ENCODE measurements at regions of chr6 and their contacts with region 1.

Region 1: GRCh38 chr6:35569011-35569461 is 56.3 kb upstream of the TULP1 start:
- DNase-seq: peak in 24 of 35 experiments; percentile 5 to 46 (median 18)
- ATAC-seq: peak; percentile 55 to 72 (median 68)
- H3K4me3 ChIP-seq: no peak overlapping the region
- H3K4me3 Mint-ChIP-seq: no peak overlapping the region
- H3K27ac ChIP-seq: no peak overlapping the region
- H3K27ac Mint-ChIP-seq: peak overlapping the region; percentile 23 to 77
- H3K4me1 ChIP-seq: no peaks in the 10 kb centered on the region
- H3K4me1 Mint-ChIP-seq: peaks cover 6 to 7% (median 6%) of the 10 kb centered on the region in 3 donors
- H3K27me3 ChIP-seq: peaks cover 0 to 2% of the 10 kb centered on the region in 2 experiments
- H3K27me3 Mint-ChIP-seq: peaks cover 5 to 7% of the 10 kb centered on the region in 2 donors

Region 2: GRCh38 chr6:35611240-35611639 is 42.2 kb after region 1 on chr6:
- CTCF ChIA-PET with region 1: no interaction called
- POLR2A ChIA-PET with region 1: interaction called in 1 of 2 experiments, 12 read pairs
- DNase-seq: peak in 21 of 35 experiments; percentile 6 to 62 (median 38)
- ATAC-seq: peak; percentile 68 to 88 (median 80)
- H3K4me3 ChIP-seq: no peak overlapping the region
- H3K4me3 Mint-ChIP-seq: peak overlapping the region in 2 of 3 donors; percentile 44 to 47
- H3K27ac ChIP-seq: peak overlapping the region; percentile 59
- H3K27ac Mint-ChIP-seq: peak overlapping the region; percentile 98
- H3K4me1 ChIP-seq: peaks cover 14 to 36% of the 10 kb centered on the region in 2 experiments
- H3K4me1 Mint-ChIP-seq: peaks cover 74 to 79% (median 74%) of the 10 kb centered on the region in 3 donors
- H3K27me3 ChIP-seq: no peaks in the 10 kb centered on the region
- H3K27me3 Mint-ChIP-seq: no peaks in the 10 kb centered on the region

Region 3: DNA sequence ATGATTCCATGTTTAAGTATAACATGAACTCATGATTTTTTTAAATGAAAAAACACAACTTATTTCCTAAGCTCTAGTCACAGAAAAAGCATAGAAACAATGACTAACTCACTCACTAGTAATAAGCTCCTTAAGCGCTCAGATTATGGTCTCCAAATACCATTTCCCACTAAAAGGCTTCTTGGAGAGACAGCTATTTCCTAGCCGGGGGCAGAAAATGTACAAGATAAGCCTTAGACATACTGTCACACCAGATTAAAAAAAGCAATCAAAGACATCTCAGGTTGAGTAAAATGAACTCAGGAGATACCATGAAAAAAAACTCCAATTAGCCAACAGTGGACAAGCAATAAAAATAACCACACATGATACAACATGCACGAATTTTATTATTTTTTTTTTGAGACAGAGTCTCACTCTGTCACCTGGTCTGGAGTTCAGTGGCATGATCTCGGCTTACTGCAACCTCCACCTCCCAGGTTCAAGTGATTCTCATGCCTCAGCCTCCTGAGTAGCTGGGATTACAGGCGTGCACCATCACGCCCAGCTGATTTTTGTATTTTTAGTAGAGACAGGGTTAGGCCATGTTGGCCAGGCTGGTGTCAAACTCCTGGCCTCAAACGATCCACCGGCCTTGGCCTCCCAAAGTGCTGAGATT is 336.9 kb after region 1 on chr6:
- CTCF ChIA-PET with region 1: no interaction called
- POLR2A ChIA-PET with region 1: no interaction called
- DNase-seq: no peak
- ATAC-seq: no peak
- H3K4me3 ChIP-seq: no peak overlapping the region
- H3K4me3 Mint-ChIP-seq: no peak overlapping the region
- H3K27ac ChIP-seq: no peak overlapping the region
- H3K27ac Mint-ChIP-seq: peak overlapping the region in 1 of 2 donors; percentile 46
- H3K4me1 ChIP-seq: no peaks in the 10 kb centered on the region
- H3K4me1 Mint-ChIP-seq: peaks cover 17 to 27% (median 22%) of the 10 kb centered on the region in 3 donors
- H3K27me3 ChIP-seq: no peaks in the 10 kb centered on the region
- H3K27me3 Mint-ChIP-seq: no peaks in the 10 kb centered on the region

Measured in T-cell (primary cell).